ENCODE measurements at regions of chr1 and their contacts with region 1.

Region 1: GRCh38 chr1:159077120-159077961 is 775 bp upstream of the AIM2 start:
- DNase-seq: peak; percentile 98
- ATAC-seq: peak; percentile 83
- H3K4me3 Mint-ChIP-seq: peak overlapping the region; percentile 85
- H3K27ac Mint-ChIP-seq: peak overlapping the region; percentile 99
- H3K4me1 Mint-ChIP-seq: peaks cover 43% of the 10 kb centered on the region
- H3K27me3 Mint-ChIP-seq: no peaks in the 10 kb centered on the region

Region 2: GRCh38 chr1:158506369-158506987 is 570.9 kb before region 1 on chr1:
- CTCF ChIA-PET with region 1: interaction called, 6 read pairs
- POLR2A ChIA-PET with region 1: no interaction called
- intact Hi-C with region 1: loop called (anchors 5 kb)
- DNase-seq: peak; percentile 64
- ATAC-seq: peak; percentile 58
- H3K4me3 Mint-ChIP-seq: no peak overlapping the region
- H3K27ac Mint-ChIP-seq: no peak overlapping the region
- H3K4me1 Mint-ChIP-seq: no peaks in the 10 kb centered on the region
- H3K27me3 Mint-ChIP-seq: peaks cover 27% of the 10 kb centered on the region

Region 3: DNA sequence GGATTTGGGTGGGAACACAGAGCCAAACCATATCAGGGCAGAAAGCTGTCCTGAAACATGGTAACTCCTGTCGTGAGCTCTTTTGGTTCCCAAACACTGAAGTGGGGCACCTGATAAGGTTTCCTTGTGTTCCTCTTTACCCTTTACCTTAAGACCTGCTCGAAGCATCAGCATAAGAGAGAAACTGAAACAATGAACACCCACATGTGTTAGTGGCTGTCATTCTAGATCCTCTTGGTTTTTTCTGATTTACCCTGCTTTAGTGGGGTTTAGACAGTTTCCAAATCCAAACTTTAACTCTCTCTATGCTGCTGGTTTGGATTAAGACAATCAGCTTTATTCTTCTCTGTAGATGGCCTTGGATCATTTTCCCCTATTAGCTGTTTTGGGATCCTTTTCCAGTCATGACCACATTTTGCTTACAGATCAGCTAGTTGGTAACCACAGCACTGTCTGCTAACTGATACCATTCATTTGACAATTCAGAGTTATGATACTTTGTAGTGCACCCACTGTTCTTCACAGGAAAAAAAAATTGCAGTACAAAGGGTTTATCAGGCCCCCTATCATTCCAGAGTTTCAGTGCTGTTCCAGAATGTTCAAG is 247.2 kb before region 1 on chr1:
- CTCF ChIA-PET with region 1: no interaction called
- POLR2A ChIA-PET with region 1: no interaction called
- intact Hi-C with region 1: no loop called
- DNase-seq: no peak
- ATAC-seq: peak; percentile 74
- H3K4me3 Mint-ChIP-seq: no peak overlapping the region
- H3K27ac Mint-ChIP-seq: no peak overlapping the region
- H3K4me1 Mint-ChIP-seq: peaks cover 19% of the 10 kb centered on the region
- H3K27me3 Mint-ChIP-seq: peaks cover 2% of the 10 kb centered on the region

Region 4: DNA sequence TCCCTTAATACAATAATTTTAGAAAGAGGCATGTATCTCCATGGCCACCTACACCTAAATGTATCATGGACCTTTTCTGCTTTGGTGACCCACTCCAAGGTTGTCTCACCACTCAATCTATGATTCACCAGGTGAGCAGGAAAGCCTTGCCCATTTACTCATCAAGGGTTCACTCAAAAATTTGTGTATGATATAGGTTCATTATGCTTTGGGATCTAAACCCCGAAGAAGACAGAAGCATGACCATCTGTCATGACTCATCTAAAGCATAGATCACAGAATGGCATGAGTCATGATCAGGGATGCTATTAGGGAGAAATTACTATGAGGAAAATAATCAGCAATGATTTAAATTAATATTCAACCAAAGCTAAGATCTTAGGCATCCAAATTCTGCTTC is 107.5 kb before region 1 on chr1:
- CTCF ChIA-PET with region 1: no interaction called
- POLR2A ChIA-PET with region 1: interaction called, 5 read pairs
- intact Hi-C with region 1: loop called in 1 of 2 experiments (anchors 1 kb)
- DNase-seq: peak; percentile 25
- ATAC-seq: peak; percentile 72
- H3K4me3 Mint-ChIP-seq: no peak overlapping the region
- H3K27ac Mint-ChIP-seq: peak overlapping the region; percentile 88
- H3K4me1 Mint-ChIP-seq: peaks cover 25% of the 10 kb centered on the region
- H3K27me3 Mint-ChIP-seq: peaks cover 3% of the 10 kb centered on the region

Region 5: DNA sequence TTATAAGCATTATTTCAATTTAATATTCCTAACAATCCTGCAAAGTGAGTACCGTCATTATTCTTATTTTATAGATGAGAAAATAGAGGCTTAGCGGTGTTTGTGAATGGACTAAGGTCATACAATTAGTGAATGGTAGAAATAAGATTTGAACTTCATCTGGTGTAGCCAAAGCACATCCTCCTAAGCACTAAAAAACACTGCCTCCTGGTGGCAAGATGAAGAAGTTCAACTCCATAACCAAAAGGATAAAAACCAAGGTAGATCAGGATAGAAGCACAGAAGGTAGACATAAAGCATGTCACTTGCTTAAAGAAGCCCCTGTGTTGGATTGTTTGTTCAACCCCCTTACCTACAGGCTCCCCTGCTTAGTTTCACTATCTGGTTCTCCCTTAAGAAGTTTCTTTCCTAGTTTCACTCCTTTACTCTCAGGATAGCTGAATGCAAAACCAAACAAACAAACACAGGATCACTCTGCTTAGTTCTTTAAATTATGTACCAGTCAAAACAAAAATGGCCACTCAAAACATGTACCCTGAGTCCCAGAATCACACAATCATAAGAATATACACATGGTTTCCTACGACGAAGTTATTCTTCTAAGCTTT is 11.9 kb after region 1 on chr1:
- CTCF ChIA-PET with region 1: interaction called, 76 read pairs
- POLR2A ChIA-PET with region 1: interaction called, 61 read pairs
- intact Hi-C with region 1: loop called (anchors 1 kb)
- DNase-seq: no peak
- ATAC-seq: peak; percentile 37
- H3K4me3 Mint-ChIP-seq: no peak overlapping the region
- H3K27ac Mint-ChIP-seq: peak overlapping the region; percentile 78
- H3K4me1 Mint-ChIP-seq: peaks cover 51% of the 10 kb centered on the region
- H3K27me3 Mint-ChIP-seq: peaks cover 2% of the 10 kb centered on the region

Region 6: GRCh38 chr1:159430985-159431384 is 353.6 kb after region 1 on chr1:
- CTCF ChIA-PET with region 1: no interaction called
- POLR2A ChIA-PET with region 1: no interaction called
- intact Hi-C with region 1: no loop called
- DNase-seq: no peak
- ATAC-seq: no peak
- H3K4me3 Mint-ChIP-seq: no peak overlapping the region
- H3K27ac Mint-ChIP-seq: no peak overlapping the region
- H3K4me1 Mint-ChIP-seq: no peaks in the 10 kb centered on the region
- H3K27me3 Mint-ChIP-seq: peaks cover 5% of the 10 kb centered on the region

Measured in activated CD4-positive, alpha-beta T cell treated with anti-CD3 and anti-CD28 coated beads for 36 hours (primary cell).